B cell (primary cell): ENCODE measurements at regions of chr10 and their contacts with region 1.

Region 1: GRCh38 chr10:14588084-14588937 is 186.4 kb downstream of the FAM107B start:
- DNase-seq: no peak
- ATAC-seq: peak; percentile 37
- H3K4me3 ChIP-seq: no peak overlapping the region
- H3K4me3 Mint-ChIP-seq: peak overlapping the region; percentile 49
- H3K27ac ChIP-seq: peak overlapping the region; percentile 30 to 70
- H3K27ac Mint-ChIP-seq: peak overlapping the region; percentile 46
- H3K4me1 ChIP-seq: peaks cover 66 to 72% of the 10 kb centered on the region in 2 donors
- H3K4me1 Mint-ChIP-seq: peaks cover 89% of the 10 kb centered on the region
- H3K27me3 ChIP-seq: no peaks in the 10 kb centered on the region
- H3K27me3 Mint-ChIP-seq: no peaks in the 10 kb centered on the region
- CTCF ChIP-seq: no peak

Region 2: DNA sequence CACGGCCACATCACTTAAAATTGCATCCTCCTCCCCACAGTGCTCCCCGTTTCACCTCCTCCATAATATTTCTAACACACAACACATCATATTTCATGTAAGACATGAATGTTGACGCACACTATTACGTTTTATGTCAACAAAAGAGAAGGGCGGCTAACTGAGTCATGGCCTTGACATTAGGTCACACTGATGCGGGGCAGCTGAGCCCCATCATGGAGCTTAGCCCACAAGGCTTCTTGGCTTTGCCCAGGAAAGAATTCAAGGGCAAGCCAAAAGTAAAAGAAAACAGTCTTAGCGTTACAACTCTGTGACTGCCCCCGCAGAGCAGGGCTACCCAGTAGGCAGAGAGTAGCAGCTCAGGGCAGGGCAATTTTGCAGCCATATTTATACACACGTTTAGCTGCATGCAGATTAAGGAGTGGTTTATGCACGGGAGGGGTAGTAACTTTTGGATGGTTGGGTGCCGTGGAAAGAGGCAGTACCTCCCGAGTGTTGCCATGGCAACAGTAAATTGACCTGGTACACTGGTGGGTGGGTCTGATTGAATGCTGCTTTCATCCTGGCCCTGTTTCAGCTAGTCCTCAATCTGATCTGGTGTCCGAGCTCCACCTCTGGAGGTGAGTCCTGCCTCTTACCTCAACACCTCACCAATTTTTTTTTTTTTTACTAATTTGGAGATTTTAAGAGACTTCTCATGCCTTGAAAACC is 101.4 kb before region 1 on chr10:
- CTCF ChIA-PET with region 1: no interaction called
- POLR2A ChIA-PET with region 1: no interaction called
- intact Hi-C with region 1: no loop called
- DNase-seq: no peak
- ATAC-seq: no peak
- H3K4me3 ChIP-seq: no peak overlapping the region
- H3K4me3 Mint-ChIP-seq: no peak overlapping the region
- H3K27ac ChIP-seq: no peak overlapping the region
- H3K27ac Mint-ChIP-seq: no peak overlapping the region
- H3K4me1 ChIP-seq: no peaks in the 10 kb centered on the region
- H3K4me1 Mint-ChIP-seq: peaks cover 4% of the 10 kb centered on the region
- H3K27me3 ChIP-seq: peaks cover 0 to 29% (median 10%) of the 10 kb centered on the region in 4 experiments
- H3K27me3 Mint-ChIP-seq: peaks cover 43% of the 10 kb centered on the region
- CTCF ChIP-seq: no peak

Region 3: GRCh38 chr10:14598809-14599764 is 10.8 kb after region 1 on chr10:
- CTCF ChIA-PET with region 1: no interaction called
- POLR2A ChIA-PET with region 1: no interaction called
- intact Hi-C with region 1: loop called (anchors 1 kb)
- DNase-seq: no peak
- ATAC-seq: no peak
- H3K4me3 ChIP-seq: no peak overlapping the region
- H3K4me3 Mint-ChIP-seq: peak overlapping the region; percentile 21
- H3K27ac ChIP-seq: peak overlapping the region in 1 of 2 donors; percentile 58
- H3K27ac Mint-ChIP-seq: peak overlapping the region; percentile 12
- H3K4me1 ChIP-seq: peaks cover 37 to 49% of the 10 kb centered on the region in 2 donors
- H3K4me1 Mint-ChIP-seq: peaks cover 79% of the 10 kb centered on the region
- H3K27me3 ChIP-seq: no peaks in the 10 kb centered on the region
- H3K27me3 Mint-ChIP-seq: no peaks in the 10 kb centered on the region
- CTCF ChIP-seq: no peak

Region 4: DNA sequence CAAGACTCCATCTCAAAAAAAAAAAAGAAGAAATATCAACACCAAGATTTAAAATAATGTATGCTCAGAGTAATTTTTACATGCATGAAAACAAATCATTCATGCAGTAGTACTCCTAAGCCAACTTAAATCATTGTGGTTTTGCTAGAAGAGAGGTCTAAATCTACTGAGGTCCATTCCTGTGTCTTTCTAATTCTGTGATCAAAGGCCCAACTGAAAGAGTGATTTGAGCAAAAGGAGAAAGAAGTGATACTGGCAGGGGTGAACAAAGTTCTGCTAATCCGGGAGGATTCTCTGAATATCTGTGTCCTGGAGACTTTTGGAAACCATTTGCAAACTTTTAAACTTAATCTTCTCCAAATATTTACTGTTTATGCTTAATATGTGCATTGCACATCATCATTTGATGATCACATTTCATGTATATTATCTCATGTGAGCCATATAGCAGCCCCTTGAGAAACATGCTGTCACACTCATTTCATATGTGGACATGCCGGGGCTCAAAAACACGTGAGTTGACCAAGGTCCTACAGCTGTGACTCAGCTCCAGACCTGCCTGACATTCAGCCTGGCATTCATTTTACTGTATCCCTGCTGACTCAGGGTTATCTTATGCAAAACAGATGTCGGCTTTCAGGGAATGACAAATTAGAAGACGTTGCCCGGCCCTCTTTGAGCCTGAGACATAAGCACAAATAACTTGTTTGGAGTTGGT is 110.0 kb after region 1 on chr10:
- CTCF ChIA-PET with region 1: no interaction called
- POLR2A ChIA-PET with region 1: no interaction called
- intact Hi-C with region 1: no loop called
- DNase-seq: no peak
- ATAC-seq: no peak
- H3K4me3 ChIP-seq: no peak overlapping the region
- H3K4me3 Mint-ChIP-seq: no peak overlapping the region
- H3K27ac ChIP-seq: no peak overlapping the region
- H3K27ac Mint-ChIP-seq: no peak overlapping the region
- H3K4me1 ChIP-seq: peaks cover 0 to 6% of the 10 kb centered on the region in 2 donors
- H3K4me1 Mint-ChIP-seq: peaks cover 3% of the 10 kb centered on the region
- H3K27me3 ChIP-seq: no peaks in the 10 kb centered on the region
- H3K27me3 Mint-ChIP-seq: no peaks in the 10 kb centered on the region
- CTCF ChIP-seq: no peak